Calu3 (cell line): ENCODE measurements at regions of chr15 and their contacts with region 1.

Region 1: DNA sequence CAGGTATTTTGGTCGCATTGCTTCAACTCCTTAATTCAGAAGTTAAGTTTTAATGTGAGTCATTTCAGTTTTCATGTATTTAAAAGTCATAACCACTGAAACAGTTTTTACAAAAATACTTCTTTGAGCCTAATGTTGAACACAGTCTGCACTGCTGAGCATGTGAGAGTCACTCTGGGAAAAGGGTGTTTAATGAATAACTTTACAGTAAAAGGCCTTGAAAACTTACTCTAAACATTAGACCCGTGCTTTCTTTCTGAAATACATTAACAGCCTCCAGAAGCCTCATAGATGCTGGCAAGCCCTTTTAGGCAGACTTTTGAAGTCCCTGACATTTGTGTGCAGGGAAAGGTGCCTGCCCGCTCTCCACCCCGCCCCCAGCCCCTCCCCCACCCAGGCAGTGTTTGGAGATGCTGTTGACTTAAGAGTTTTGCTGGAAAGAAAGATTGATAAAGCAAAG is 68.9 kb upstream of the NR2F2 start:
- DNase-seq: no peak
- H3K4me3 Mint-ChIP-seq: no peak overlapping the region
- H3K27ac Mint-ChIP-seq: peak overlapping the region; percentile 99
- H3K4me1 Mint-ChIP-seq: peaks cover 69% of the 10 kb centered on the region
- H3K27me3 Mint-ChIP-seq: no peaks in the 10 kb centered on the region
- CTCF ChIP-seq: no peak

Region 2: DNA sequence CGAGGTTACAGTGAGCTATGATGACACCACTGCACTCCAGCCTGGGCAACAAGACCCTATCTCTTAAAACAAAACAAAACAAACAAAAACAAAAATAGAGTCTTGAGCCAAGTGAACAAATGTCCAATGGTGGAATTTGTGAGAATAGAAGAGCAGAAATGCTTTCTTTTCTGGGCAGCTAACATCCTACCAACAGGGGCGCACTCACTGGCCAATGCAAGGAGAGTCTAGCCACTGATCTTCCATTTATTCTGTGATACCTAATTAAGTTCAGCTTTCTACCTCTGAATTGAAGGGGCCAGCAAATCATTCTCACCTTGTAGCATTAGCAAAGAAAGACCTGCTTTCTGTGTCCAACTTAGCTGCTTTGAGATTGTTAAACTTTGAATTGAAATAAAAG is 233.0 kb before region 1 on chr15:
- CTCF ChIA-PET with region 1: no interaction called
- intact Hi-C with region 1: loop called (anchors 5 kb)
- DNase-seq: no peak
- H3K4me3 Mint-ChIP-seq: no peak overlapping the region
- H3K27ac Mint-ChIP-seq: no peak overlapping the region
- H3K4me1 Mint-ChIP-seq: peaks cover 51% of the 10 kb centered on the region
- H3K27me3 Mint-ChIP-seq: no peaks in the 10 kb centered on the region
- CTCF ChIP-seq: no peak

Region 3: GRCh38 chr15:96170979-96171739 is 90.4 kb before region 1 on chr15:
- CTCF ChIA-PET with region 1: no interaction called
- intact Hi-C with region 1: loop called (anchors 1 kb)
- DNase-seq: peak; percentile 69
- H3K4me3 Mint-ChIP-seq: no peak overlapping the region
- H3K27ac Mint-ChIP-seq: no peak overlapping the region
- H3K4me1 Mint-ChIP-seq: peaks cover 19% of the 10 kb centered on the region
- H3K27me3 Mint-ChIP-seq: no peaks in the 10 kb centered on the region
- CTCF ChIP-seq: no peak

Region 4: GRCh38 chr15:96273317-96274086 is 11.9 kb after region 1 on chr15:
- CTCF ChIA-PET with region 1: interaction called, 12 read pairs
- intact Hi-C with region 1: no loop called
- DNase-seq: peak; percentile 80
- H3K4me3 Mint-ChIP-seq: peak overlapping the region; percentile 48
- H3K27ac Mint-ChIP-seq: peak overlapping the region; percentile 81
- H3K4me1 Mint-ChIP-seq: peaks cover 86% of the 10 kb centered on the region
- H3K27me3 Mint-ChIP-seq: no peaks in the 10 kb centered on the region
- CTCF ChIP-seq: no peak